ENCODE measurements at regions of chr17 and their contacts with region 1.

Region 1: GRCh38 chr17:10618202-10618635 is 38.9 kb downstream of the MYH3 start:
- DNase-seq: peak; percentile 54
- ATAC-seq: peak; percentile 92
- H3K4me3 Mint-ChIP-seq: no peak overlapping the region
- H3K27ac Mint-ChIP-seq: no peak overlapping the region
- H3K4me1 Mint-ChIP-seq: peaks cover 6% of the 10 kb centered on the region
- H3K27me3 Mint-ChIP-seq: peaks cover 7% of the 10 kb centered on the region
- CTCF ChIP-seq: no peak

Region 2: GRCh38 chr17:9905902-9906301 is 712.3 kb before region 1 on chr17:
- CTCF ChIA-PET with region 1: no interaction called
- POLR2A ChIA-PET with region 1: no interaction called
- intact Hi-C with region 1: loop called (anchors 1 kb)
- DNase-seq: no peak
- ATAC-seq: no peak
- H3K4me3 Mint-ChIP-seq: no peak overlapping the region
- H3K27ac Mint-ChIP-seq: no peak overlapping the region
- H3K4me1 Mint-ChIP-seq: no peaks in the 10 kb centered on the region
- H3K27me3 Mint-ChIP-seq: peaks cover 5% of the 10 kb centered on the region
- CTCF ChIP-seq: no peak

Region 3: DNA sequence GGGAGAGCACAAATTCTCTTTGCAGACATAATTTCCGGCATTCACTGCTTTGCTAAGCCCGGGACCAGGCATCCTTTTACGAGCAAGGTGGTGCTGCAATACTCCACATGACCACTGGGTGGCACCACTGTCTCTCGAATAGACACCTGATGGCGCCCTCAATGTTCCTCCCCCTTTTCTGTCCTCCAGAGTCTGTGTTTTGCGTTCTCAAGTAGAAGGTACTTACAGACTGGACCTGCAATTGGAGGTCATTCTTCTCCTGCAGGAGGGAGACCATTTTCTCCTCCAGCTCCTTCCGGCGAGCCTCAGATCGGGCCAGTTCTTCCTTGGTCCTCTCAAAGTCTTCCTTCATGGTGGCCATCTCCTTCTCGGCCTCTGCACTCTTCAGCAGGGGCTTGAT is 290.6 kb before region 1 on chr17:
- CTCF ChIA-PET with region 1: no interaction called
- POLR2A ChIA-PET with region 1: no interaction called
- intact Hi-C with region 1: loop called (anchors 1 kb)
- DNase-seq: peak; percentile 55
- ATAC-seq: peak; percentile 62
- H3K4me3 Mint-ChIP-seq: no peak overlapping the region
- H3K27ac Mint-ChIP-seq: no peak overlapping the region
- H3K4me1 Mint-ChIP-seq: no peaks in the 10 kb centered on the region
- H3K27me3 Mint-ChIP-seq: peaks cover 10% of the 10 kb centered on the region
- CTCF ChIP-seq: peak; percentile 76

Region 4: DNA sequence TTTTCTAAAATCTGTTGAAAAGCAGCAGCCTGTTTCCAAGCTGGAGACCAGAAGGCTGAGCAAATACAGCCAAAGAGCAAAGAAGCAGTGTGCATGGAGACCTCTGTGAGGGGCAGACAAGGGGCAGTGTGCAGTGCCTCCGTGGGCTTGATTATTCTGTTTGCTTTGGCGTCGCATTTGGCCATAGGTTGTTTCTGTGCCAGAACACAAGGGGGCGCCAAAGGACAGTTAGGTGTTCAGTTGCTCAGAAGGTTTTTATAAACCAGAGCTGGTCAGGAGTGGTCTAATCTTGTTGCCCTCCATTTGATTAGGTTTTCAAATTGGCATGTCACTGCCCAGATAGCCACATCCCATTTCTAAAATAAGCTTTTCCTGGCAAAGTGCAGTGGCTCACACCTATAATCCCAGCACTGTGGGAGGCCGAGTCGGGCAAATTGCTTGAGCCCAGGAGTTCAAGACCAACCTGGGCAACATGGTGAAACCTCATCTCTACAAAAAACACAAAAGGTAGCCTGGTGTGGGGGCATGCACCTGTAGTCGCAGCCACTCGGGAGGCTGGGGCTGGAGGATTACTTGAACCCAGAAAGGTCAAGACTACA is 28.3 kb after region 1 on chr17:
- CTCF ChIA-PET with region 1: interaction called, 11 read pairs
- POLR2A ChIA-PET with region 1: no interaction called
- intact Hi-C with region 1: no loop called
- DNase-seq: peak; percentile 56
- ATAC-seq: peak; percentile 65
- H3K4me3 Mint-ChIP-seq: no peak overlapping the region
- H3K27ac Mint-ChIP-seq: no peak overlapping the region
- H3K4me1 Mint-ChIP-seq: peaks cover 2% of the 10 kb centered on the region
- H3K27me3 Mint-ChIP-seq: no peaks in the 10 kb centered on the region
- CTCF ChIP-seq: peak; percentile 26

Region 5: GRCh38 chr17:11690681-11691080 is 1072.5 kb after region 1 on chr17:
- CTCF ChIA-PET with region 1: no interaction called
- POLR2A ChIA-PET with region 1: no interaction called
- intact Hi-C with region 1: no loop called
- DNase-seq: no peak
- ATAC-seq: no peak
- H3K4me3 Mint-ChIP-seq: no peak overlapping the region
- H3K27ac Mint-ChIP-seq: no peak overlapping the region
- H3K4me1 Mint-ChIP-seq: no peaks in the 10 kb centered on the region
- H3K27me3 Mint-ChIP-seq: no peaks in the 10 kb centered on the region
- CTCF ChIP-seq: no peak